B cell (primary cell): ENCODE measurements at regions of chr1 and their contacts with region 1.

Region 1: GRCh38 chr1:212035123-212035834 is at the starts of genes DTL and INTS7:
- DNase-seq: peak; percentile 99
- ATAC-seq: peak; percentile 86
- H3K4me3 ChIP-seq: peak within 1 kb of the TSS; percentile 58 to 95 (median 84)
- H3K4me3 Mint-ChIP-seq: peak within 1 kb of the TSS; percentile 99
- H3K27ac ChIP-seq: peak within 1 kb of the TSS; percentile 71 to 75
- H3K27ac Mint-ChIP-seq: peak within 1 kb of the TSS; percentile 95
- H3K4me1 ChIP-seq: peaks cover 16 to 19% of the 10 kb centered on the region in 2 donors
- H3K4me1 Mint-ChIP-seq: peaks cover 50% of the 10 kb centered on the region
- H3K27me3 ChIP-seq: no peaks in the 10 kb centered on the region
- H3K27me3 Mint-ChIP-seq: no peaks in the 10 kb centered on the region
- CTCF ChIP-seq: peak; percentile 95
- total RNA-seq, gene DTL: 0.10 and 0.37 TPM in 2 replicates
- total RNA-seq, gene INTS7: 15.9 and 19.2 TPM in 2 replicates

Region 2: GRCh38 chr1:211258756-211259637 is 776.3 kb before region 1 on chr1 and contains the start of gene RCOR3:
- CTCF ChIA-PET with region 1: no interaction called
- POLR2A ChIA-PET with region 1: no interaction called
- intact Hi-C with region 1: loop called (anchors 2 kb)
- DNase-seq: peak; percentile 93
- ATAC-seq: peak; percentile 74
- H3K4me3 ChIP-seq: peak within 1 kb of the TSS; percentile 81 to 93 (median 90)
- H3K4me3 Mint-ChIP-seq: peak within 1 kb of the TSS; percentile 92
- H3K27ac ChIP-seq: peak within 1 kb of the TSS; percentile 88 to 90
- H3K27ac Mint-ChIP-seq: peak within 1 kb of the TSS; percentile 96
- H3K4me1 ChIP-seq: peaks cover 11 to 16% of the 10 kb centered on the region in 2 donors
- H3K4me1 Mint-ChIP-seq: peaks cover 15% of the 10 kb centered on the region
- H3K27me3 ChIP-seq: no peaks in the 10 kb centered on the region
- H3K27me3 Mint-ChIP-seq: no peaks in the 10 kb centered on the region
- CTCF ChIP-seq: peak; percentile 84
- total RNA-seq, gene RCOR3: 120 and 124 TPM in 2 replicates

Region 3: DNA sequence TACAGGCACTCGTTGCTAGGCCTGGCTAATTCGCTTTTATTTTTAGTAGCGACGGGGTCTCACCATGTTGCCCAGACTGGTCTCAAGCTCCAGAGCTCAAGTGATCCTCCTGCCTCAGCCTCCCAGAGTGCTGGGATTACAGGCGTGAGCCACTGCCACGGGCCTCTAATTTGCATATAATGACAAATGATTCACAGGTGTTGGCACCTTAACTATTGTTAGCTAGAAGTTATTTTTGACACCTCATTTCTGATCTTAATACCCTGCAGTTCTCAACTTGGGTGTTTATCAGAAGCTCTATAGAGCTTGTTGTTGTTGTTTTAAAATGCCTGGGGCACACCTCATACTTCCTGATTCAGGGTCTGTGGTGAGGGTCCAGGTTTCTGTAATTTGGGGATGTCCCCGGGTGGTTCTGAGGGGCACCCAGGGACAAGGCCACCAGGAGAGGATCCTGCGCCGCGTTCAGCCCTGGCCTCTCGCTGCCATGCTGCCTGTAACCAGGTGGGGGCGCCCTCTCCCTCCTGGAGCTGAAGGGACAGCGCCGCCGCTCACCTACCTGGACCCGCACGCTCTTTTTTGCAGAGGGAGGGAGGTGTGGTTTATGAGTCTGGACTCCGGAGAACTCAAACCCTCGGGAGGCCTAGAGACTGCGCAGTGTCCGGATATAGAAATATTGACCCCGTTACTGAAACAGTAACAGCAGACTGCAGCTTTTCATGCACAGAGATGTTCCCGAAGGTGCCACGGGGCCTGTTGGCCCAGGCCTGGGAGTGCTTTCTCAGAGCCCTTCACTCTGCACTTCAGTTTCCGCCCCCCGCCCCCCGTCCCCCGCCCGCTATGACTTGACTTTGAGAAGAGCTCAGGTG is 336.9 kb before region 1 on chr1:
- CTCF ChIA-PET with region 1: interaction called, 33 read pairs
- POLR2A ChIA-PET with region 1: interaction called, 5 read pairs
- intact Hi-C with region 1: loop called (anchors 1 kb)
- DNase-seq: peak; percentile 76
- ATAC-seq: peak; percentile 45
- H3K4me3 ChIP-seq: peak overlapping the region in 3 of 5 experiments; percentile 21 to 44 (median 34)
- H3K4me3 Mint-ChIP-seq: peak overlapping the region; percentile 76
- H3K27ac ChIP-seq: peak overlapping the region in 1 of 2 donors; percentile 11
- H3K27ac Mint-ChIP-seq: peak overlapping the region; percentile 59
- H3K4me1 ChIP-seq: peaks cover 44 to 52% of the 10 kb centered on the region in 2 donors
- H3K4me1 Mint-ChIP-seq: peaks cover 53% of the 10 kb centered on the region
- H3K27me3 ChIP-seq: peaks cover 0 to 5% (median 0%) of the 10 kb centered on the region in 4 experiments
- H3K27me3 Mint-ChIP-seq: peaks cover 5% of the 10 kb centered on the region
- CTCF ChIP-seq: peak; percentile 97

Region 4: DNA sequence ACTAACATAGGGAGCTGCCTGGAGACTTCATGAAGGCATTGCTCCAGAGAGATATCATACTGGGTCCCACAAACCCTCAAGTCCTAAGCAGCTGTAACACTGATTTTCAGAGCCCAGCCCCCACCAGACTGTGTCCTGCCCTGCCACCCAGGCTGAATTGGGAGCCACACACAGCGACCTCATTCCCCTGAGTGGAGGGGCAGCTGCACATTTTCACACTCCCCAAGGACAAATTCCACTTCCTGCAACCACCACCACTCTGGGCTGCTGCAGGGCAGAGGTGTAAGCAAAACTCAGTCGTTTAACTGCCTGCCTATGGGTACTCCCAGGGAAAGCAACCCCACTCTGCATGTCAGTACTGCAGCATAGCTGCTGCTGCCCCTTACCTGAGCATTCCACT is 20.1 kb after region 1 on chr1:
- CTCF ChIA-PET with region 1: interaction called, 4 read pairs
- POLR2A ChIA-PET with region 1: interaction called, 10 read pairs
- intact Hi-C with region 1: no loop called
- DNase-seq: no peak
- ATAC-seq: no peak
- H3K4me3 ChIP-seq: no peak overlapping the region
- H3K4me3 Mint-ChIP-seq: no peak overlapping the region
- H3K27ac ChIP-seq: no peak overlapping the region
- H3K27ac Mint-ChIP-seq: no peak overlapping the region
- H3K4me1 ChIP-seq: no peaks in the 10 kb centered on the region
- H3K4me1 Mint-ChIP-seq: peaks cover 2% of the 10 kb centered on the region
- H3K27me3 ChIP-seq: no peaks in the 10 kb centered on the region
- H3K27me3 Mint-ChIP-seq: no peaks in the 10 kb centered on the region
- CTCF ChIP-seq: no peak

Region 5: DNA sequence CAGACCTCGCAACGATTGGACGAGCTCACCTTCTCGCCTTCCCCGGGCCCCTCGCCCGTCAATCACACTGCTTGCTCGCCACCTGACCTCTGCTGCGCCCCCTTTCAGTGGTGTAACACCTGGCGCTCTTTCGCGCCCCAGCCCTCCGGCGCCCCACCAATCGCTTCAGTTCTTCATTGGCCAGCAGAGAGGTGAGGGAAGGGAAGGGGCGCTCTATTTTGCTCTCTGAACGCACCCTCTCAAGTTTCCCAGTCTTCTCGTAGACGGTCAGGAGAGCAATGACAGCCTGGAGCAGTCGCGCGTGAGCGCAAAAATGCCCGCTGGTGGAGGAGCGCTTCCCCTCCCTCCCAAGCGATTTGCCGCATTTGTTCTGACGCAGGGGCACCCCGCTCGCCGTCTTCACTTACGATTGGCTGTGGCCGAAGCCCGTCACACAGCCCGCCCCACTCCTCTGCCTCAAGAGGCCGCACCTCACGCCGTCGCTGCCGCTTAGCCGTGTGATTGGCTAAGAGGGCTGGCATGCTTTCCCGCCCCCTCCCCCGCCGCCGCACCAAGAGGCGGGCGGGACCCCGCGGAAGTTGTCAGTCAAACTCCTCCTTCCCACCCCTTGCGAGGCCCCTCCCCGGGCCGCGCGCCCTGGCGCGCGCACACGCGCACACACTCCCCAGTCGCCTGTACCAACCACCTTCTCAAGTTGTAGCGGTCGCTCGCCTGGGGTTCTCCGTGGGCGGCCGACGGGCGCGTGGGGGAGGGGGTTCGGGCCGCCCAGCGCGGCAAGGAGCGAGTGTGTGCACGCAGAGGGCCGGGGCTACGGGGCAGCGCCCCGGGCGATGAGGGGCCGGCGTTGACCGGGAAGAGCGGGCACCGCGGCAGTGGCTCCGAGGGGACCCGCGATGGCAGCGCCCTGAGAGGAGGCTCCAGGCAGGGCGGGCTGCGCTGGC is 249.7 kb after region 1 on chr1 and contains the start of gene PPP2R5A:
- CTCF ChIA-PET with region 1: interaction called, 13 read pairs
- POLR2A ChIA-PET with region 1: interaction called, 3 read pairs
- intact Hi-C with region 1: loop called (anchors 1 kb)
- DNase-seq: peak; percentile 100
- ATAC-seq: peak; percentile 85
- H3K4me3 ChIP-seq: peak within 1 kb of the TSS; percentile 75 to 97 (median 92)
- H3K4me3 Mint-ChIP-seq: peak within 1 kb of the TSS; percentile 93
- H3K27ac ChIP-seq: peak within 1 kb of the TSS; percentile 89 to 90
- H3K27ac Mint-ChIP-seq: peak within 1 kb of the TSS; percentile 96
- H3K4me1 ChIP-seq: peaks cover 22 to 28% of the 10 kb centered on the region in 2 donors
- H3K4me1 Mint-ChIP-seq: peaks cover 41% of the 10 kb centered on the region
- H3K27me3 ChIP-seq: no peaks in the 10 kb centered on the region
- H3K27me3 Mint-ChIP-seq: no peaks in the 10 kb centered on the region
- CTCF ChIP-seq: peak; percentile 62
- total RNA-seq, gene PPP2R5A: 41.1 and 43.4 TPM in 2 replicates

Region 6: GRCh38 chr1:212414328-212415106 is 379.2 kb after region 1 on chr1 and contains the start of gene PACC1:
- CTCF ChIA-PET with region 1: interaction called, 5 read pairs
- POLR2A ChIA-PET with region 1: no interaction called
- intact Hi-C with region 1: loop called (anchors 1 kb)
- DNase-seq: peak; percentile 98
- ATAC-seq: peak; percentile 98
- H3K4me3 ChIP-seq: peak within 1 kb of the TSS; percentile 64 to 93 (median 83)
- H3K4me3 Mint-ChIP-seq: peak within 1 kb of the TSS; percentile 99
- H3K27ac ChIP-seq: peak within 1 kb of the TSS; percentile 83 to 84
- H3K27ac Mint-ChIP-seq: peak within 1 kb of the TSS; percentile 86
- H3K4me1 ChIP-seq: peaks cover 24 to 35% of the 10 kb centered on the region in 2 donors
- H3K4me1 Mint-ChIP-seq: peaks cover 39% of the 10 kb centered on the region
- H3K27me3 ChIP-seq: no peaks in the 10 kb centered on the region
- H3K27me3 Mint-ChIP-seq: no peaks in the 10 kb centered on the region
- CTCF ChIP-seq: no peak
- total RNA-seq, gene PACC1: 16.7 and 18.3 TPM in 2 replicates

Region 7: DNA sequence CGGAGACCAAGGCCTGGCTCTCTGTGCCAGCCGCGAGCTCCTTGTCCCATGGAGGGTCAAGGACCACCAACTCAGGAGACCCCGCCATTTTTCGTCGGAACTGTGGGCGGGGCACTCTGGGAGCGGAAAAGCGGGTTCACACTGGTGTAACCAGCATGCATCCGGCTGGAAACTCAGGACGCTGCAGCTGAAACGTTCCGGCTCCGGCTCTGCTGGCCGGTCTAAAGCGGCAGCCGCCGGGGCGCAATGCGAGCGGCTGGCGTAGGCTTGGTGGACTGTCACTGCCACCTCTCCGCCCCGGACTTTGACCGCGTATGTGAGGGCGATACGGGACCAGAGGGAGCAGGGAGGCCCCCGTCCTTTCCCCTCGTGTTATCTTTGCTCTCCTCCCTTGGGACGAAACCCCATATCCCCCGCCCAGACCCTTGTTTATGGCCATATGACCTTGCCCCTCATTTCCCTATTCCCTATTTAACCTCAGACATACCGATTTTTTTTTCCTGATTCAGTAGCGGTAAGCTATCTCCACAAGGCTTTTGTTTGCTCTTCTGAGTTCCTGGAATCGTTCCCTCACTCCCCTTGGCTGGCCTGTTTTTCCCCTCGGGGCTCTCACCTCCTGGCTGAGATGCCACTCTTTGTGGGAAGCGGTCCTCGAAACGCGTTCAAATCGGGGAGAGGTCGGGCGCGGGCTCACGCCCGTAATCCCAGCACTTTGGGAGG is 756.6 kb after region 1 on chr1 and contains the starts of genes NSL1 and TATDN3:
- CTCF ChIA-PET with region 1: no interaction called
- POLR2A ChIA-PET with region 1: interaction called, 6 read pairs
- intact Hi-C with region 1: loop called (anchors 5 kb)
- DNase-seq: peak; percentile 97
- ATAC-seq: peak; percentile 72
- H3K4me3 ChIP-seq: peak within 1 kb of the TSS; percentile 77 to 93 (median 83)
- H3K4me3 Mint-ChIP-seq: peak within 1 kb of the TSS; percentile 93
- H3K27ac ChIP-seq: peak within 1 kb of the TSS; percentile 91 to 92
- H3K27ac Mint-ChIP-seq: peak within 1 kb of the TSS; percentile 93
- H3K4me1 ChIP-seq: peaks cover 39 to 61% of the 10 kb centered on the region in 2 donors
- H3K4me1 Mint-ChIP-seq: peaks cover 46% of the 10 kb centered on the region
- H3K27me3 ChIP-seq: no peaks in the 10 kb centered on the region
- H3K27me3 Mint-ChIP-seq: no peaks in the 10 kb centered on the region
- CTCF ChIP-seq: no peak
- total RNA-seq, gene NSL1: 45.9 and 50.6 TPM in 2 replicates
- total RNA-seq, gene TATDN3: 28.6 and 30.7 TPM in 2 replicates